ENCODE measurements at regions of chr9 and their contacts with region 1.

Region 1: GRCh38 chr9:20884985-20885593 is 146.4 kb downstream of the HACD4 start:
- DNase-seq: peak; percentile 76
- ATAC-seq: peak; percentile 42
- H3K4me3 Mint-ChIP-seq: no peak overlapping the region
- H3K27ac Mint-ChIP-seq: no peak overlapping the region
- H3K4me1 Mint-ChIP-seq: no peaks in the 10 kb centered on the region
- H3K27me3 Mint-ChIP-seq: no peaks in the 10 kb centered on the region
- CTCF ChIP-seq: peak; percentile 63

Region 2: DNA sequence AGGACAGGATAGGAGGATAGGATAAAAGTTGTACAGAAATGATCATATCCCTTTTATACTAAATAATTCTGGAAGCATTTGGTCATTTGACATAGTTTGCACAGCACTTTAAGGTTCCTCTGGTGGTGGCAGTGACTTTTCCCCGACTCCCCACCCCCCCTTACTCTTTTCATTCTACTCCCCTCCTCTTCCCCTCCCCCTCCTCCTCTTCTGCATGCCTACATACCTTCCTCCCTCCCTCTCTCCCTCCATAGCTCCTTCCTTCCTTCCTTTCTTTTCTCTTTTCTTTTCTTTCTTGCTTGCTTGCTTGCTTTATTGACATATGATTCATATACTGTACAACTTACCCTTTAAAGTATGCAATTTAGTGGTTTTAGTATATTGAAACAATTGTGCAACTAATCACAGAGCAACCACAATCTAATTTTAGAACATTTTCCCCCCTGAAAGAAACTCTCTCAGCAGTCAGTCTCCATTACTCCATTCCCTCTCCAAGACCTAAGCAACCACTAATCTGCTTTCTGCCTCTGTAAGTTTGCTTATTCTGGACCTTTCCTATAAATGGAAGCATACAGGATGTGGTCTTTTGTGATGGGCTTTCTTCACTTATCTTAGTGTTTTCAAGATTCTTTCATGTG is 12.6 kb before region 1 on chr9:
- CTCF ChIA-PET with region 1: interaction called, 16 read pairs
- POLR2A ChIA-PET with region 1: no interaction called
- intact Hi-C with region 1: no loop called
- DNase-seq: no peak
- ATAC-seq: no peak
- H3K4me3 Mint-ChIP-seq: no peak overlapping the region
- H3K27ac Mint-ChIP-seq: no peak overlapping the region
- H3K4me1 Mint-ChIP-seq: peaks cover 8% of the 10 kb centered on the region
- H3K27me3 Mint-ChIP-seq: no peaks in the 10 kb centered on the region
- CTCF ChIP-seq: no peak

Region 3: DNA sequence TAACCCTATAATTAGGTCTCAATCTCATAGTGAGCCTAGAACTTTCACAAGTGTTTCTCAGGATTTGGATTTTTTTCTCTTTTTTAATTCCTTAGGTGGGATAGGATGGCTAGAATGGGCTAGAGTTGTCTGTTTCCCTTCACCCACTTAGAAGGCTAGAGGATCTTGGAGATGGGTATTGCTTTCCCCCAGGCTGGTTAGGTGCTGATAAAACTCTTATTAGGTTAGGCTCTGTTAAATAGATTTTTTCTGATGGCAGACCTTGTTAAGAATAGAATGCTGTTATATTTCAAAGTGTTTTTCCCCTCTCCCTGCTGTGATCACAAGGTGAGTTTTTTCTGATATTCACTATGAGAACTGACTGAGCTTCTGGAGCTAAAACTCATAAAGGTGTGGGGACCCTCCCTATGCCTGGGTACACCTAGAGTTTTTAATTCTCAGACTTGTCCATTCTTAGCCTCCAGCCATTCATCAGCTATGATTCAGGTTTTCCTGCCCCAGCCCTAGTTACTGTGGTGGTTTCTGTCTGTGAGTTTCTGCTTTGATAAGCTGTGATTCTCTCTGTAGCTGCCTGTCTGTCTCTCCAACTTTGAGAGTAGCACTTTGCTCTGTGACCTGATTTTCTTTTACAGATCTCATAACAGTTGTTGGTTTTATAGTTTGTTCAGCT is 13.9 kb after region 1 on chr9:
- CTCF ChIA-PET with region 1: interaction called, 14 read pairs
- POLR2A ChIA-PET with region 1: no interaction called
- intact Hi-C with region 1: no loop called
- DNase-seq: peak; percentile 25
- ATAC-seq: peak; percentile 53
- H3K4me3 Mint-ChIP-seq: no peak overlapping the region
- H3K27ac Mint-ChIP-seq: no peak overlapping the region
- H3K4me1 Mint-ChIP-seq: peaks cover 6% of the 10 kb centered on the region
- H3K27me3 Mint-ChIP-seq: no peaks in the 10 kb centered on the region
- CTCF ChIP-seq: no peak